Activated CD4-positive, alpha-beta memory T cell treated with anti-CD3 and anti-CD28 coated beads, Interleukin-2, amount 10 ng/mL, durations not matched to agents 7 days and 5 days (primary cell): ENCODE measurements at regions of chr19 and their contacts with region 1.

Region 1: DNA sequence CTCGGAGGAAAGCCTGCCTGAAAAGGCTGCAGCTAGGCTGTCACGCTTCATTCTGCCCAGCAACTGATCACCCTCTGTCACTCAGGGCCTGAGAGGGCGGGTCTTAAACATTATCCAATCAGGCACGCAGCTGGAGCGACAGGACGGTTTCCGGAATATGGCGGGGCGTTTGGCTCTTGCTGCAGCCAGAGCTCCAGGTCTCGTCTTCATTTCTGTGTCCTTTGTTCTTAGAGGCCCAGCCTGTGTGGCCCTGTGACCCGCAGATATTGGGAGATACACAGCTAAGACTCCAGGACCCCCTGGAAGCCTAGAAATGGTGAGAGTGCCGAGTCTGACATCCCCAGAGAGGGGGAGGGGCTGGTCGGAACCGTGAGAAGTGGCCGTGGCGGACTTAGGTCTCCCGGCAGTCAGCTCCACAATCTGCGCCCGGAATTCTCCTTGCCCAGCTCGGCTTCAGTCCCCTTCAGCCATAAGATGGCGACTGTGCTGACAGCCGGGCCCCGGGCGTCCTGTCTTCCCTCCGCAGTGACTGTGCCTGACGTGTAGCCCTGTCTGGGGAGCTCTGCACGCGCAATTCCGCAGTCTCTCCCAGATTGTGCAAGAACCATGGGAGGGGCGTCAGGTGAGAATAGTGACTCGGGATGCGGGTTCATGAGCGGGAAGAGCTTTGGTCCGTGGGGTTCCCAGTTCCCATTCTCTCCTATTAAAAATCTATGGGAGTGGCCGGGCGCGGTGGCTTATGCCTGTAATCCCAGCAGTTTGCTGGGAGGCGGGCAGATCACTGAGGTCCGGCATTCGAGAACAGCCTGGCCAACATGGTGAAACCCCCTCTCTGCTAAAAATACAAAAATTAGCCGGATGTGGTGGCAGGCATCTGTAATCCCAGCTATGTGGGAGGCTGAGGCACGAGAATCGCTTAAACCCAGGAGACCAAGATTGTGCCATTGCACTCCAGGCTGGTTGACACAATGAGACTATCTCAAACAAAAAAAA is at the start of gene ZNF429:
- DNase-seq: peak; percentile 93
- H3K4me3 Mint-ChIP-seq: peak within 1 kb of the TSS; percentile 100
- H3K27ac Mint-ChIP-seq: peak within 1 kb of the TSS; percentile 96
- H3K4me1 Mint-ChIP-seq: peaks cover 25% of the 10 kb centered on the region
- H3K27me3 Mint-ChIP-seq: no peaks in the 10 kb centered on the region
- total RNA-seq, gene ZNF429: 8.0 to 8.3 TPM

Region 2: GRCh38 chr19:20776083-20777076 is 729.4 kb before region 1 on chr19 and contains the start of gene ZNF66:
- CTCF ChIA-PET with region 1: no interaction called
- POLR2A ChIA-PET with region 1: interaction called, 14 read pairs
- DNase-seq: peak; percentile 95
- H3K4me3 Mint-ChIP-seq: peak within 1 kb of the TSS; percentile 99
- H3K27ac Mint-ChIP-seq: peak within 1 kb of the TSS; percentile 94
- H3K4me1 Mint-ChIP-seq: peaks cover 7% of the 10 kb centered on the region
- H3K27me3 Mint-ChIP-seq: no peaks in the 10 kb centered on the region
- total RNA-seq, gene ZNF66: 6.0 to 7.5 TPM

Region 3: GRCh38 chr19:21082011-21082975 is 423.5 kb before region 1 on chr19 and contains the start of gene ZNF714:
- CTCF ChIA-PET with region 1: no interaction called
- POLR2A ChIA-PET with region 1: interaction called, 12 read pairs
- DNase-seq: peak; percentile 91
- H3K4me3 Mint-ChIP-seq: peak within 1 kb of the TSS; percentile 99
- H3K27ac Mint-ChIP-seq: peak within 1 kb of the TSS; percentile 98
- H3K4me1 Mint-ChIP-seq: peaks cover 34% of the 10 kb centered on the region
- H3K27me3 Mint-ChIP-seq: no peaks in the 10 kb centered on the region
- total RNA-seq, gene ZNF714: 20.4 to 23.7 TPM

Region 4: GRCh38 chr19:21197590-21198295 is 308.0 kb before region 1 on chr19:
- CTCF ChIA-PET with region 1: no interaction called
- POLR2A ChIA-PET with region 1: no interaction called
- DNase-seq: no peak
- H3K4me3 Mint-ChIP-seq: no peak overlapping the region
- H3K27ac Mint-ChIP-seq: no peak overlapping the region
- H3K4me1 Mint-ChIP-seq: no peaks in the 10 kb centered on the region
- H3K27me3 Mint-ChIP-seq: no peaks in the 10 kb centered on the region

Region 5: GRCh38 chr19:21358768-21359451 is 146.8 kb before region 1 on chr19 and contains the start of gene ZNF738:
- CTCF ChIA-PET with region 1: no interaction called
- POLR2A ChIA-PET with region 1: interaction called, 12 read pairs
- DNase-seq: peak; percentile 88
- H3K4me3 Mint-ChIP-seq: peak within 1 kb of the TSS; percentile 98
- H3K27ac Mint-ChIP-seq: peak within 1 kb of the TSS; percentile 96
- H3K4me1 Mint-ChIP-seq: peaks cover 10% of the 10 kb centered on the region
- H3K27me3 Mint-ChIP-seq: no peaks in the 10 kb centered on the region
- total RNA-seq, gene ZNF738: 10.5 to 11.2 TPM

Region 6: DNA sequence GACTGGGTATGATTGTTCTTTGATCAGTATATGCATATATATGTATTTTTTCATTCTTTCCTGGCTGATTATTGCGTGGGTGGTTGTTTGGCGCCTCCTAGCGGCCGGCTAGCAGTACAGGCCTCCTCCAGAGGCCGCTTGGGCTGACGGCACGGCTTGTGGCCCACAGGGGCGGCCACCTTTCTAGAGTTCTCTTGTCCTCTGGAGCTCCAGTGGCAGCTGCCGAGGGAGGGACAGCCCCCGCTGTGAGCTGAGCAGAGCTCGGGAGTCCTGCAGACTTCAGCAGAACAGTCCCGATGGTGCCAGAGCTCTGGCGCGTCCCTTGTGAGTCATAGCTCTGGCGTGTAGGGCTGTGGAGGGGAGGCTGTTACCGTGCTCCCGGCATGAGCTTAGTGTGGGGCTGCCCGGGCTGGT is 22.9 kb before region 1 on chr19:
- CTCF ChIA-PET with region 1: interaction called, 19 read pairs
- POLR2A ChIA-PET with region 1: interaction called, 6 read pairs
- DNase-seq: peak; percentile 70
- H3K4me3 Mint-ChIP-seq: no peak overlapping the region
- H3K27ac Mint-ChIP-seq: no peak overlapping the region
- H3K4me1 Mint-ChIP-seq: no peaks in the 10 kb centered on the region
- H3K27me3 Mint-ChIP-seq: no peaks in the 10 kb centered on the region

Region 7: GRCh38 chr19:21758296-21758695 is 252.5 kb after region 1 on chr19:
- CTCF ChIA-PET with region 1: no interaction called
- POLR2A ChIA-PET with region 1: no interaction called
- DNase-seq: no peak
- H3K4me3 Mint-ChIP-seq: no peak overlapping the region
- H3K27ac Mint-ChIP-seq: no peak overlapping the region
- H3K4me1 Mint-ChIP-seq: peaks cover 2% of the 10 kb centered on the region
- H3K27me3 Mint-ChIP-seq: no peaks in the 10 kb centered on the region

Region 8: GRCh38 chr19:21835810-21836444 is 330.2 kb after region 1 on chr19 and contains the start of gene ZNF43:
- CTCF ChIA-PET with region 1: interaction called, 5 read pairs
- POLR2A ChIA-PET with region 1: interaction called, 23 read pairs
- DNase-seq: peak; percentile 93
- H3K4me3 Mint-ChIP-seq: peak within 1 kb of the TSS; percentile 94
- H3K27ac Mint-ChIP-seq: peak within 1 kb of the TSS; percentile 96
- H3K4me1 Mint-ChIP-seq: peaks cover 17% of the 10 kb centered on the region
- H3K27me3 Mint-ChIP-seq: no peaks in the 10 kb centered on the region
- total RNA-seq, gene ZNF43: 21.3 to 22.9 TPM